Right cardiac atrium (tissue), 5 donors: ENCODE measurements at regions of chr12 and their contacts with region 1.

Region 1: DNA sequence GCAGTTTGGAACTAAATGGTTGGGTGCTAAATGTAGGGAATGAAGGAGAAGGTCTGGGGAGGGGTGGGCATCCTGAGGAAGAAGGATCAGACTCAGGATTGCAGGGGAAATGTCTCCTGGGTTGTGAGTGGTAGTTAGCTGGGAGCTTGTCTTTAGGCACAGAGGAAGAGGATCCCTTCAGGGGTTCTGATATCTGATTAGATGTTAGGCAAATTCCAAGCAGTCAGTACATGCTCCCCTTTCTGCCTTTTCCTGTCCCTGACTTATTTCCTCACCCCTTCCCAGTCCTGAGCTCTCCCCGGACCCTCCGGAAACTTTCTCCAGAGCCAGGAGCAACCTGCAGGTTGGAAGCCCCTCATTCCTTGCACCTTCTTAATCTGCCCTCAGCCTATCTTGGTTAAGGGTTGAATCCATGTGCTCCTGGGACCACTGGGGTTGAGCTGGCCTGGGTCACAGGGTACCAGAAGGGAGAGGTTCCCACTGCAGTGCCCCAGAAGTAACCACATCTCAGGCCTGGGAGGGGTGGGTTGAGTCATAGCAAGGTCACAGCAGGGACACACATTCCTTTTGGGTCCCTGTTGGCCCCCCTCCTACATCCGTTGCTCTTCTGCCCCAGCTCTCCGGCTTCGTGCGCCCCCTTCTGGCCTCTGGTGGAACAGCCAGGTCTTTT is 1.6 kb downstream of the IGFBP6 start:
- DNase-seq: peak; percentile 95 to 97 (median 96)
- ATAC-seq: peak; percentile 79 to 84
- H3K4me3 ChIP-seq: peak overlapping the region; percentile 17
- H3K27ac ChIP-seq: peak overlapping the region; percentile 69
- H3K4me1 ChIP-seq: peaks cover 6% of the 10 kb centered on the region
- H3K27me3 ChIP-seq: no peaks in the 10 kb centered on the region

Region 2: GRCh38 chr12:53071591-53072551 is 27.2 kb before region 1 on chr12:
- intact Hi-C with region 1: loop called in 3 of 4 experiments (anchors 2 kb)
- DNase-seq: peak; percentile 90 to 95 (median 93)
- ATAC-seq: peak; percentile 60 to 69
- H3K4me3 ChIP-seq: no peak overlapping the region
- H3K27ac ChIP-seq: peak overlapping the region; percentile 92
- H3K4me1 ChIP-seq: peaks cover 32% of the 10 kb centered on the region
- H3K27me3 ChIP-seq: no peaks in the 10 kb centered on the region

Region 3: GRCh38 chr12:53145383-53146260 is 46.5 kb after region 1 on chr12:
- intact Hi-C with region 1: no loop called
- DNase-seq: no peak
- ATAC-seq: no peak
- H3K4me3 ChIP-seq: no peak overlapping the region
- H3K27ac ChIP-seq: no peak overlapping the region
- H3K4me1 ChIP-seq: no peaks in the 10 kb centered on the region
- H3K27me3 ChIP-seq: no peaks in the 10 kb centered on the region

Region 4: GRCh38 chr12:53287741-53288216 is 188.7 kb after region 1 on chr12:
- intact Hi-C with region 1: no loop called
- DNase-seq: peak; percentile 76 to 89 (median 89)
- ATAC-seq: peak; percentile 75 to 77
- H3K4me3 ChIP-seq: no peak overlapping the region
- H3K27ac ChIP-seq: no peak overlapping the region
- H3K4me1 ChIP-seq: no peaks in the 10 kb centered on the region
- H3K27me3 ChIP-seq: no peaks in the 10 kb centered on the region